HEK293T (cell line): ENCODE measurements at regions of chr12 and their contacts with region 1.

Region 1: DNA sequence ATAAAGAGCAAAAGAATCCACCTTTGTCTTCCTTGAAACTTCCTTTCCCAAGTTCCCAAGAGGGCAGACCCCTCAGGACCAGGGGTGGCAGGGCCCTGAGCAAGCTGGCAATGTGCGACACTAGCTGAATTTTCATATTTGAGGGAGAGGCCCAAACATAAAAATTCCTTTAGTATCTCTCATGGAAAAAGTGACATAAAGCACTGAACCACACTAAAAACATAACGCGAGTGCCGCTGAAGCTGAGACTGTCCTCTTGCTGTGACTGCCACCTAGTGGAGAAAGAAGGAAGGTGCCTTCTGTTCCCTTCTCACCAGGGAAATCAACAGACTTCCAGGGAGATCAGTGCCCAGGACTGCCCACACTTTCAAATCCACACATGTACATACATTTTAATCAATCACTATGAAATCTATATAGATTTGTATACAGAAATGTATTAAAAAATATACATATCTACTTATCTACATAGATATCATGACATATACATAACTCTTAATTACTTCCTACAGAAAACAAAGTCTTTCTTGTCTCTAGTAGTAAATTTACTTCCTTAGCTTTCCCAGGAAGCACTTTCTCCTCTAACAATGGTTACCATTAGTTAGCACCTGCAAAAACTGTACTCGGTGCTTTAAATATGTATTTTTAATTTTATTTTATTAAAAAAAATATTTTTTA is 53.8 kb downstream of the SSH1 start:
- DNase-seq: peak; percentile 84

Region 2: DNA sequence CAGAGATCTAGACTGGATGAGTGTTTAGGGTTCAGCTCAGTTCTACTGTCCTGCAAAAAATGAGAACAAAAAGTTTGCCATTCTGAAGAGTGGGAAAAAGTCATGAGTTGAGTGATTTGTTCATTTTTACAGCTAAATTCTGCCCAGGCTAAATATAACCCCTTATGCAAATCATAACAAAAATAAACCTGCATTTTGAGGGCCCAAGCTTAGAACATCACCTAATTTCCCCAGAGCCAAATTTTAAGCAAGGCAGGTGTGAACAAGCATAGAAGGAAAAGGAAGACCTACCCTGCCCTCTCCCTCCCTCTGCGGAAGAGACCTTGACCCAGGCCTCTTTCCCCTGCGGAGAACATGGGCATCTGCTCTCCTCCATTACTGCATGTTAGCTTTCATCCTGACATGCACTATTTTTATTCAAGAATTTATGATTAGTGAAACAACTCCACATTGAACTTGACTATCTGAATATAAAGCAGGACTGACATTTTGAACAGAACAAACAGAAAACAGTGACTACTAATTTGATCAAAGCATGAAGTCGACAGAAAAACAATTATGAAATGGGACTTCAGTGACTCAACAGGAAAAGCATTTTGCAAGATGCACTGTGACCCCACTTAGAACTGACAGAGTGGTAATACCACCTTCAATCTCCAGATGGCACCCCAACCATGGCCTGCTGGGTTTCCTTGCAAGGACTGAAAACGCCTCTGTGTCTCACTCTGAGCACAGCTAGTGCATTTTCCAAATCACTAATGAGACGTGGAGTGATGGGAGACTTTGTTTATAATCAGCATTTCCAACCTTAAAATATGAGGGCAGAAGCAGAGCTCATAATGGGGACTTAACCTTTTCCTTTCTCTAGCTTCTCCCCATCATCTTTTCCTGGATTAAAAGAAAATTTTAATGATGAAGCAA is 139.0 kb before region 1 on chr12:
- CTCF ChIA-PET with region 1: interaction called, 21 read pairs
- POLR2A ChIA-PET with region 1: no interaction called
- DNase-seq: peak; percentile 77

Region 3: DNA sequence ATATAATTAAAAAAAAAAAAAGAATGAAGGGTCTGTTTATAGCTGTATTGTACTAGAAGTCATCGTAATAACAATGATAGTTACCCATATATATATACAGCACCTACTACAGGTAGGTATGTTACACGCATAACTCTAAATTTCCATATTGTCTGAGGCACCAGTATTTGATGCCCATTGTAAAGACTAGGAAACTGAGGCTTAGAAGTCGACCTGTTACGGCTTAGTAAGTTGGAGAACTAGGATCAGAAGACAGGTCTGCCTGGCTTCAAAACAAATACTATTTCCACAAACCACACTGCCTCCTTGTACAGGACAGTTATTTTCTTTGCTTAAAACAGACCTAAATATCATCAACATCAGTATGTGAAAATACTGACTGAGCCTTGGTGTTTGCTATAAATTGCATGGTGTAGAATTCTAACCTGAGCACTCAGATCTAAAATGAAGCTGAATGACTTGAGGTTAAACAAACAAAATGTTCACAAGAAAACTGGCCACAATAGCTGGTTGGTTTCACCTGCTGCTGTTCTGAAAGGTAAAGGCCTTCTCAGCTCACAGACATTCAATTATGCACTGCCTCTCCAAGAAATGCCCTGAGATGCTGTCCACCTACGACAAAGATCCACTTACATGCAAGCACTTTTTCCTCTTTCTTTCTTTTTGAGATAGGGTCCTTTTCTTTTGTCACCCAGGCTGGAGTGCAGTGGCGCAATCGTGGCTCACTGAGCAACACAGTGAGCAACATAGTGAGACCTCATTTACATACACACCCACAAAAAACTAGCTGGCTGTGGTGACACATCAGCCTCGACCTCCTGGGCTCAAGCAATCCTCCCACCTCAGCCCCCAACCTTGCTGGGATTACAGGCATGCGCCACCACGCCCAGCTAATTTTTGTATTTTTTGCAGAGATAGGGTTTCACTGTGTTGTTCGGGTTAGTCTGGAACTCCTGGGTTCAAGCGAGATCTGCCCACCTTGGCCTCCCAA is 18.1 kb after region 1 on chr12:
- CTCF ChIA-PET with region 1: no interaction called
- POLR2A ChIA-PET with region 1: no interaction called
- DNase-seq: no peak